ENCODE measurements at regions of chr6 and their contacts with region 1.

Region 1: DNA sequence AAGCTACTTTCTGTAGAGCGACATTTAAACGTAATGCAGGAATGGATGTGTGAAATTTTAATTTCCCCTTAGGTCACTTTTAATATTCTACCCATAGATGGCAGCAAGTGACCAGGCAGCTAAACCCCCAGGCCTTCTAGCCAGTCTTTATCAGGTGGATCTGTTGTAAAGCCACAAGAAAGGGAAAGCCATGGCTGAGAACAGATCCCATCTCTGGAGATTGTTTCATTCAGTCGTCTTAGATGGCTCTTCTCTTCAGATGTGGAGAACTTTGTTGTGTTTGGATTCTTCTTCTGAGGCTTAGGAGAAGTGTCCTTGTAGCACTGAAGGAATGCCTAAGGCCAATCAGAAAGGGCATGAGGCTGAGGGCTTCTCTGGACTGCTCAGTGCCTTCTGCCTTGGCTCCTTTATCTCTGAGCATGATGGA is 15.8 kb upstream of the RNF182 start:
- DNase-seq: peak; percentile 55
- ATAC-seq: peak; percentile 88
- H3K4me3 ChIP-seq: no peak overlapping the region
- H3K27ac ChIP-seq: no peak overlapping the region
- H3K4me1 ChIP-seq: no peaks in the 10 kb centered on the region
- H3K27me3 ChIP-seq: no peaks in the 10 kb centered on the region
- CTCF ChIP-seq: peak; percentile 86
- EP300 ChIP-seq: no peak
- POLR2A ChIP-seq: no peak
- RAD21 ChIP-seq: peak; percentile 78

Region 2: DNA sequence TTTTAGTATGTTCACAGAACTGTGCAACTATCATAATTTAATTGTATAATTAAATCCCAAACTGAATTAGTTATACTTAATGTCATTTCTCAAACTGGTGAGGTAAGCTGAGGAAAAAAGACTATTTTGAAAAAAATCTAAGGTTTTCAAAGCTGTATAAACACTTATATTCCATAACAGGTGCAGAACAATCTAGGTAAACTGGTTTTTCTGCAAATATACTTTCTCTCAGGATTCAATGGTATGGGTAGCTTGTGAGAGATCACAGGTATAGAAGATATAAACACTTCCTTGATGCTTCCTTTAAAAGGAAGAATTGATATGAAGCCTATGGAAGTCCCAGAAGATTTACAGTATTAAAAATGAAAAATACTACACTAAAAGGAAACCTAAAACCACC is 260.1 kb before region 1 on chr6:
- CTCF ChIA-PET with region 1: no interaction called
- POLR2A ChIA-PET with region 1: no interaction called
- in situ Hi-C with region 1: no loop called
- intact Hi-C with region 1: no loop called
- DNase-seq: no peak
- ATAC-seq: no peak
- H3K4me3 ChIP-seq: no peak overlapping the region
- H3K27ac ChIP-seq: no peak overlapping the region
- H3K4me1 ChIP-seq: no peaks in the 10 kb centered on the region
- H3K27me3 ChIP-seq: no peaks in the 10 kb centered on the region
- CTCF ChIP-seq: no peak
- EP300 ChIP-seq: no peak
- POLR2A ChIP-seq: no peak
- RAD21 ChIP-seq: no peak

Region 3: DNA sequence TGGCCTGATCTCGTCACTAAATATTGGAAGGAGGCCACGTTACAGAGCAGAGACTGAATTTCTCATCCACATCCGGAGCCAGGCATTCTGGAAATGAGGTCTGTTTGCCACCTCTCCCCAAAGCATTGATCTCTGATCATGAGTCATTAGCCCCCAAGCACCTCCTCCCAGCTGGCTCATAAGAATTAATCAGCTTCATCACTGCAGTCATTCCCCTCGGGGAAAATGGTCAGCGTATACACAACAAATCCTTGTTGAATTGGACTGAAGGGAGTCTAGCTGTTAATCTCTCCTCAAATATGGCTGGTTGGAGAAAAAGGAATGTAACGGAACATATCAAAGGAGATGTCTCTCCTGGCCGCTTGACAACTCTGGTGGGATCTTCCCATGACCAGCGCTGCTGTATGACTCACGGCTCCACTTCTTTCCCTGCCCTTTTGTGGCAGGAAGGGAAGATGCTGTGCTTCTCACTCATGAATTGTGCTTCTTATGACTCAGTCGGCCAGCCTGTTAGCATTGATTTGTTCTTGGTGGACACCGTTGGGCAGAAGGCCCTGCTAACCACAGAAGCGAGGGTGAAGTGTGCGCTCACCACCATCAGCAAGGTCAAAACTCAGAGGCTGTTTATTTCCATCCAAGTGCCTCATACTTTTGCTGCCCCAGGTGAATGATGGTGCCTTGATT is 92.5 kb after region 1 on chr6:
- CTCF ChIA-PET with region 1: no interaction called
- POLR2A ChIA-PET with region 1: no interaction called
- in situ Hi-C with region 1: no loop called
- intact Hi-C with region 1: loop called (anchors 2 kb)
- DNase-seq: peak; percentile 19
- ATAC-seq: no peak; the same call in 2 of the 3 replicates
- H3K4me3 ChIP-seq: no peak overlapping the region
- H3K27ac ChIP-seq: no peak overlapping the region
- H3K4me1 ChIP-seq: no peaks in the 10 kb centered on the region
- H3K27me3 ChIP-seq: peaks cover 0 to 25% of the 10 kb centered on the region in 2 experiments; a peak in 3 of 5 replicates
- CTCF ChIP-seq: no peak
- EP300 ChIP-seq: no peak
- POLR2A ChIP-seq: no peak
- RAD21 ChIP-seq: no peak

Region 4: DNA sequence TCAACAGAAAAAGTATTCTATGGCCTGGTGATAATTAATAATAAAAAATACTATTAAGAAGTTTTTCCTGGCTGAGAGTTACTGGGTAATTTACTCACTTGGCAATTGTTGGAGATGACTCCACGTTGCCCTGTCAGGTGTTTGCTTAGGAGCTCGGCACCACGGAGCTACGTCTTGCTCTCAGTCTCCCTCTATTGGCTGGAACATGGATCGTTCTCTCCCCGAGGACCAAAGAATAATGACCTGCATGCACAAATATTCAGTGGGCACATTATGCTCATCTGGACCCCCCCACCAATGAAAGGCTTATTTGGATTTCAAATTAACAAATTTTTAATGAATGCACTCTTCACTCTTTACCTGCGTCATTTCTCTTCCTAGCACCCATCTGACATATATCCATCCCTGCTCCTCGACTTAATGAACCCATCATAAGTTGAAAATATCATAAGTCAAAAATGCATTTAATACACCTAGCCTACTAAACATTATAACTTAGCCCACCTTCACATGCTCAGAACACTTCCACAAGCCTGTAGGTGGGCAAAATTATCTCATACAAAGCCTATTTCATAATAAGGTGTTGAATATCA is 137.6 kb after region 1 on chr6:
- CTCF ChIA-PET with region 1: interaction called, 18 read pairs
- POLR2A ChIA-PET with region 1: no interaction called
- in situ Hi-C with region 1: no loop called
- intact Hi-C with region 1: loop called (anchors 1 kb)
- DNase-seq: peak; percentile 30
- ATAC-seq: peak; percentile 82
- H3K4me3 ChIP-seq: no peak overlapping the region
- H3K27ac ChIP-seq: no peak overlapping the region
- H3K4me1 ChIP-seq: no peaks in the 10 kb centered on the region
- H3K27me3 ChIP-seq: peaks cover 0 to 14% of the 10 kb centered on the region in 2 experiments; a peak in 2 of 5 replicates
- CTCF ChIP-seq: peak; percentile 66
- EP300 ChIP-seq: no peak
- POLR2A ChIP-seq: no peak
- RAD21 ChIP-seq: peak; percentile 19; the same call in 1 of the 2 replicates

Region 5: GRCh38 chr6:14059791-14060444 is 150.9 kb after region 1 on chr6:
- CTCF ChIA-PET with region 1: no interaction called
- POLR2A ChIA-PET with region 1: no interaction called
- in situ Hi-C with region 1: loop called (anchors 5 kb)
- intact Hi-C with region 1: no loop called
- DNase-seq: no peak
- ATAC-seq: no peak
- H3K4me3 ChIP-seq: no peak overlapping the region
- H3K27ac ChIP-seq: no peak overlapping the region
- H3K4me1 ChIP-seq: no peaks in the 10 kb centered on the region
- H3K27me3 ChIP-seq: peaks cover 0 to 19% of the 10 kb centered on the region in 2 experiments; a peak in 3 of 5 replicates
- CTCF ChIP-seq: no peak
- EP300 ChIP-seq: no peak
- POLR2A ChIP-seq: no peak
- RAD21 ChIP-seq: no peak

Region 6: GRCh38 chr6:14066782-14067406 is 157.9 kb after region 1 on chr6:
- CTCF ChIA-PET with region 1: interaction called, 13 read pairs
- POLR2A ChIA-PET with region 1: no interaction called
- in situ Hi-C with region 1: loop called (anchors 5 kb)
- intact Hi-C with region 1: loop called (anchors 1 kb)
- DNase-seq: peak; percentile 55
- ATAC-seq: peak; percentile 79
- H3K4me3 ChIP-seq: no peak overlapping the region
- H3K27ac ChIP-seq: no peak overlapping the region
- H3K4me1 ChIP-seq: no peaks in the 10 kb centered on the region
- H3K27me3 ChIP-seq: peaks cover 1 to 3% of the 10 kb centered on the region in 2 experiments; a peak in 1 of 5 replicates
- CTCF ChIP-seq: peak; percentile 76
- EP300 ChIP-seq: no peak
- POLR2A ChIP-seq: no peak
- RAD21 ChIP-seq: peak; percentile 49; the same call in 1 of the 2 replicates

Region 7: GRCh38 chr6:14117158-14118090 is 208.5 kb after region 1 on chr6 and contains the start of gene CD83:
- CTCF ChIA-PET with region 1: no interaction called
- POLR2A ChIA-PET with region 1: no interaction called
- in situ Hi-C with region 1: no loop called
- intact Hi-C with region 1: no loop called
- DNase-seq: peak; percentile 13
- ATAC-seq: peak; percentile 90
- H3K4me3 ChIP-seq: peak within 1 kb of the TSS; percentile 63 to 81 (median 71); a peak in 5 of 6 replicates
- H3K27ac ChIP-seq: no peak within 1 kb of the TSS
- H3K4me1 ChIP-seq: peaks cover 4% of the 10 kb centered on the region; the same call in 1 of the 2 replicates
- H3K27me3 ChIP-seq: peaks cover 0 to 4% of the 10 kb centered on the region in 2 experiments; a peak in 3 of 5 replicates
- CTCF ChIP-seq: peak; percentile 47
- EP300 ChIP-seq: no peak
- POLR2A ChIP-seq: peak in 1 of 2 experiments; percentile 28; a peak in 1 of 4 replicates
- RAD21 ChIP-seq: no peak
- total RNA-seq, gene CD83: 1.7 and 2.3 TPM in 2 replicates

Region 8: GRCh38 chr6:14144678-14145113 is 235.7 kb after region 1 on chr6:
- CTCF ChIA-PET with region 1: interaction called, 29 read pairs
- POLR2A ChIA-PET with region 1: no interaction called
- in situ Hi-C with region 1: loop called (anchors 5 kb)
- intact Hi-C with region 1: no loop called
- DNase-seq: peak; percentile 72
- ATAC-seq: peak; percentile 98
- H3K4me3 ChIP-seq: no peak overlapping the region
- H3K27ac ChIP-seq: no peak overlapping the region
- H3K4me1 ChIP-seq: no peaks in the 10 kb centered on the region
- H3K27me3 ChIP-seq: peaks cover 2 to 24% of the 10 kb centered on the region in 2 experiments; a peak in 3 of 5 replicates
- CTCF ChIP-seq: peak; percentile 91
- EP300 ChIP-seq: no peak
- POLR2A ChIP-seq: no peak
- RAD21 ChIP-seq: peak; percentile 86

Measured in HepG2 (cell line).